ENCODE measurements at regions of chr21 and their contacts with region 1.

Region 1: GRCh38 chr21:44510508-44511210 is 29.3 kb downstream of the KRTAP10-1 start:
- H3K4me3 ChIP-seq: peak overlapping the region; percentile 35
- H3K27ac ChIP-seq: no peak overlapping the region
- H3K4me1 ChIP-seq: no peaks in the 10 kb centered on the region; the same call in 1 of the 2 replicates
- CTCF ChIP-seq: peak; percentile 98

Region 2: DNA sequence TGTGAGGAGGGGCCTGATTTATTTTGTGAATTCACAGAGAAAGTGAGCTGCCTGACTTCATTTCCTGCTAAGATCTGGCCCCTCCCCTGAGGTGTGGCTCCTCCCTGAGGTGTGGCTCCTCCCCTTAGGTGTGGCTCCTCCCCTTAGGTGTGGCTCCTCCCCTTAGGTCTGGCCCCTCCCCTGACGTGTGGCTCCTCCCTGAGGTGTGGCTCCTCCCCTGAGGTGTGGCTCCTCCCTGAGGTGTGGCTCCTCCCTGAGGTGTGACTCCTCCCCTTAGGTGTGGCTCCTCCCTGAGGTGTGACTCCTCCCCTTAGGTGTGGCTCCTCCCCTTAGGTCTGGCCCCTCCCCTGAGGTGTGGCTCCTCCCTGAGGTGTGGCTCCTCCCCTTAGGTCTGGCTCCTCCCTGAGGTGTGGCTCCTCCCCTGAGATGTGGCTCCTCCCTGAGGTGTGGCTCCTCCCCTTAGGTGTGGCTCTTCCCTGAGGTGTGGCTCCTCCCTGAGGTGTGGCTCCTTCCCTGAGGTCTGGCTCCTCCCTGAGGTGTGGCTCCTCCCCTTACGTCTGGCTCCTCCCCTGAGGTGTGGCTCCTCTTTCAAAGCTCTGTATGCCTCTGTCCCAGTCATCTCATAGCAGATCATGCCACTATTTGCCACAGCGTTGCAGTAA is 82.2 kb before region 1 on chr21:
- CTCF ChIA-PET with region 1: no interaction called
- POLR2A ChIA-PET with region 1: no interaction called
- H3K4me3 ChIP-seq: no peak overlapping the region
- H3K27ac ChIP-seq: no peak overlapping the region
- H3K4me1 ChIP-seq: no peaks in the 10 kb centered on the region
- CTCF ChIP-seq: no peak

Region 3: DNA sequence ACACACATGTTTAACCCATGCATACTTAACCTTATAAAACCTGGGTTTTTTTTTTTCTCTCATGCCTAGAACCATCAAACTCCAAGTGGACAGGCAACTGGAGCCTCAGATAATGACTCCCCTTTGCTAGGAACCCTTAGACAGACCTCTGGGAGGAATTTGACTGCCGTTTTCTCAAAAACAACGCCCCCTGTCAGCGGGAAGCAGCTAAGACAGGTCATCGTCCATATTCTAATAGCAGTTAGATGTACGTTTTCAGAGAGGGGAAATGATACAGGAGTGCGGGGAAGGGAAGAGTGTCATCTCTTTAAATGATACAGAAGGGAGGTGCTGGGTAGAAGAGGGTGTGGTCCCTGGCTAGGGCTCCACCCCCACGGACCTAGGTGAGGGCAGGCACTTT is 20.7 kb before region 1 on chr21:
- CTCF ChIA-PET with region 1: interaction called, 14 read pairs
- POLR2A ChIA-PET with region 1: no interaction called
- H3K4me3 ChIP-seq: no peak overlapping the region
- H3K27ac ChIP-seq: no peak overlapping the region
- H3K4me1 ChIP-seq: no peaks in the 10 kb centered on the region
- CTCF ChIP-seq: no peak

Region 4: DNA sequence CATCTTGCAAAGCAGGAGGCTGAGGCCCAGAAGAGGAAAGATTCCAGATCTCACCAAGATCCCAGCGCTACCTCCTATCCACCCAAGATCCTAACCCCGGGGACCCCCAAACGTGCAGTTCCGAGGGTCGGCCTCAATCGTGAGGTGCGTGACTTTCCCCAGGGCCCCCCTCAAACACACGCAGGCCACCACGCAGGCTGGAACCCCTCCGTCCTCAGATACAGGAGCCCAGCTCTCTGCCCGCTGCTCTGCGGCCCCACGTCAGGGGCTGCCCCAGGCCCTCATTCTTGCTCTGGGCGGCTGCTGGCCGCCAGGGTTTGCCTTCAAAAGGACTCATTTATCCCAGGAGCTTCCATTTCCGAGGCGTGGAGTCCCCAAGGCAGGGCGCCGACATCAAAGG is 10.5 kb before region 1 on chr21:
- CTCF ChIA-PET with region 1: interaction called, 17 read pairs
- POLR2A ChIA-PET with region 1: no interaction called
- H3K4me3 ChIP-seq: no peak overlapping the region
- H3K27ac ChIP-seq: no peak overlapping the region
- H3K4me1 ChIP-seq: no peaks in the 10 kb centered on the region
- CTCF ChIP-seq: no peak

Region 5: GRCh38 chr21:44742418-44743153 is 231.9 kb after region 1 on chr21:
- CTCF ChIA-PET with region 1: interaction called, 25 read pairs
- POLR2A ChIA-PET with region 1: no interaction called
- H3K4me3 ChIP-seq: no peak overlapping the region
- H3K27ac ChIP-seq: no peak overlapping the region
- H3K4me1 ChIP-seq: no peaks in the 10 kb centered on the region
- CTCF ChIP-seq: peak; percentile 20; the same call in 1 of the 2 replicates

Region 6: DNA sequence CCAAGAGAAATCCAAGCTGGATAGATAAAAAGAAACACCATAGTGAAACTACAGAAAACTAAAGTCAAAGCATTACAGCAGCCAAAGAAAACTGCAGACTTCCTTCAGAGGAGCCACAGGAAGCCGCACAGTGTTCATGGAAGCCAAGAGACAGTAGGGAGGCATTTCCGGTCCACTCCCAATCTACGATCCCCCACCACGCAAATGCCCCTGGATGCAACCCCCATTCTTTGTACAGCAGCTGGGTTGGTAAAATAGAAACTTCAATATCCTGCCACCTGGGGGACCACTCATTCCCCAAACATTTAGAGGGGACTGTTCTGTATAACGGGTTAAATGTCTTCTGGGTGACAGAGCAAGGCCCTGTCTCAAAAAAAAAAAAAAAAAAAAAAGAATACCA is 244.6 kb after region 1 on chr21:
- CTCF ChIA-PET with region 1: interaction called, 11 read pairs
- POLR2A ChIA-PET with region 1: no interaction called
- H3K4me3 ChIP-seq: no peak overlapping the region
- H3K27ac ChIP-seq: no peak overlapping the region
- H3K4me1 ChIP-seq: no peaks in the 10 kb centered on the region
- CTCF ChIP-seq: no peak

Region 7: DNA sequence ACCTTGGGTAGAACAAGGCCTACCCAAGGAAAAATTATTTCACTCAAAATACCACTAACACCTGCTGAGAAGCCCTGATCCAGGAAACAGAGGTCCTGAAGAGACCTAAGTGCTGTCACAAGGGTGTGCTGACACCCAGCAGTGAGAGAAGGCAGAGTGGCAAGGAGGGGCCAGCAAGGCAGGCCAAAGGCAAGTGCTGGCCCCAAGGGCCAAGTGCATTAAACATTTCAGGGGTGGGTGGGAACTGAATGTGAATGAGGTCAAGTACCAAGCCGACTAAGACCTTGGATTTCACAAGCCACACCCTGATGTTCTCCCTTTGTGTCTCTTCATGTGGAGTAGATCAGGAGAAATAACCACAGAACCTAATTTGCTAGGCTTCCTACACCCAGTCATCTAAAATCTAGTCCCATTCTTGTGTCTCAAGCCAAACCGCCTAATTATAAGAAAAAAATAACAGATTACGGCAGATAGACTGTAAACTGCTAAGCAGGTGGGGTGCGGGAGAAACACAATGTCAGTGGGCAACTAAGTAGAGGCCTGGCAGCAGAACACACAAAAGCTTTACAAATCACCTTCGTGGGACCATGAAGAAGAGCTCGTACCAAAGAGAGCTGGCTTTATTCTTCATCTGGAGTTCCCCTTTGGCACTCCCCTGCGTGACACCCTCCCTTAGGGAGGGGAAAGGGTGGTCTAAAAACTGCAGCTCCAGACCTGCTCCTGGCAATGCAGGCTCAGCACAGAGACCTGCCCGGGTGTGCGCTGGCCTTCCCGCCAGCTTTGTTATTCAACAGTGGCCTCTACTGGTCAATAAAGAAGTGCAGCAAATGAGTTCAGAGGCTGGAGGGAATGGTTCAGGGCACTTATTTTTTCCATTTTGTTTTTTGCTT is 282.3 kb after region 1 on chr21:
- CTCF ChIA-PET with region 1: interaction called, 43 read pairs
- POLR2A ChIA-PET with region 1: no interaction called
- H3K4me3 ChIP-seq: no peak overlapping the region
- H3K27ac ChIP-seq: no peak overlapping the region
- H3K4me1 ChIP-seq: no peaks in the 10 kb centered on the region
- CTCF ChIP-seq: peak; percentile 44

Region 8: DNA sequence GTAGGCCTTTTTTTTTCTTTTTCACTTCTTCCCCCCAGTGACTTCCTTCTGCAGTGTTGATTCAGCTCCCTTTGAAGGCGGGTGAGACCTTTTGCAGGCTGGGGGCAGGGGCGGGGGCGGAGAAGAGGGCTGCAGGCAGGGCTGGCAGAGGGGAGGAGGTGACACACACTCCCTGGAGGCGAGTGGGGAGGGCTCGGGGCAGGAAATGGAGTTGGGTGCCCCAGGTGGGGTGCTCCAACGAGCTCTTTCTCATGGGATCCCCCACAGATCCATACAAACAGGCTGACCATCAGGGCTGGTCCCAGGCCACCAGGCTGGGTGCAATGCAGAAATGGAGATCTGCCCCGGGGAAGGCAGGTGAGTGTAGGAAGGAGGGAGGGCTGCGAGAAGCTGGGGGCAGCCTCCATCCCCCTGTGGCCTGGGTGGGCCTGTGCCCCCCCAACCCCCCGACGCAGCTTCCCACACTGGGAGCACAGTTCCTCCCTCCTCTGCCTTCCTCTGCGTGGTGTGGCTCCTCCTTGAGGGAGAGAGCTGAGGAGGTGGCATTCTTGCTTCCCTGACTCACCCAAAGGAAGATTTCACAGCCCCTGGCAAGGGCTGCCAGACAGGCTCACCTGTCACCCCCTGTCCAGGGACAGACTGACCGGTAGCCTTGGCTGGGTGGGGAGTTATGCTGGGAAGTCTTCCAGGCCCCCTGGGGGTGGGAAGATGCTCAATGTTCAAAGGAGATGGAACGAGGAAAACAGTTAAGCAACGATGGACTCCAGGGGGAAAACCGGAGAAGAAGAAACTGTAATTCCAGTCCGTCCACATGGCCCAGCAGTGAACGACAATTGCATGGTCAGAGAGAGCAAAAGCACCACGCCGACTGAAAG is 417.2 kb after region 1 on chr21:
- CTCF ChIA-PET with region 1: interaction called, 11 read pairs
- POLR2A ChIA-PET with region 1: no interaction called
- H3K4me3 ChIP-seq: no peak overlapping the region
- H3K27ac ChIP-seq: no peak overlapping the region
- H3K4me1 ChIP-seq: 0 out of 2 replicates have a peak, but pooled peaks cover 5% of the 10 kb centered on the region
- CTCF ChIP-seq: no peak